ENCODE measurements at regions of chr7 and their contacts with region 1.

Region 1: GRCh38 chr7:39894904-39895303 is 55.2 kb upstream of the CDK13 start:
- DNase-seq: no peak
- ATAC-seq: no peak
- H3K4me3 Mint-ChIP-seq: no peak overlapping the region
- H3K27ac Mint-ChIP-seq: no peak overlapping the region
- H3K4me1 Mint-ChIP-seq: no peaks in the 10 kb centered on the region
- H3K27me3 Mint-ChIP-seq: no peaks in the 10 kb centered on the region
- CTCF ChIP-seq: no peak

Region 2: GRCh38 chr7:39934132-39934531 is 39.2 kb after region 1 on chr7:
- CTCF ChIA-PET with region 1: interaction called, 12 read pairs
- POLR2A ChIA-PET with region 1: no interaction called
- intact Hi-C with region 1: no loop called
- DNase-seq: no peak
- ATAC-seq: no peak
- H3K4me3 Mint-ChIP-seq: no peak overlapping the region
- H3K27ac Mint-ChIP-seq: no peak overlapping the region
- H3K4me1 Mint-ChIP-seq: no peaks in the 10 kb centered on the region
- H3K27me3 Mint-ChIP-seq: no peaks in the 10 kb centered on the region
- CTCF ChIP-seq: no peak

Region 3: DNA sequence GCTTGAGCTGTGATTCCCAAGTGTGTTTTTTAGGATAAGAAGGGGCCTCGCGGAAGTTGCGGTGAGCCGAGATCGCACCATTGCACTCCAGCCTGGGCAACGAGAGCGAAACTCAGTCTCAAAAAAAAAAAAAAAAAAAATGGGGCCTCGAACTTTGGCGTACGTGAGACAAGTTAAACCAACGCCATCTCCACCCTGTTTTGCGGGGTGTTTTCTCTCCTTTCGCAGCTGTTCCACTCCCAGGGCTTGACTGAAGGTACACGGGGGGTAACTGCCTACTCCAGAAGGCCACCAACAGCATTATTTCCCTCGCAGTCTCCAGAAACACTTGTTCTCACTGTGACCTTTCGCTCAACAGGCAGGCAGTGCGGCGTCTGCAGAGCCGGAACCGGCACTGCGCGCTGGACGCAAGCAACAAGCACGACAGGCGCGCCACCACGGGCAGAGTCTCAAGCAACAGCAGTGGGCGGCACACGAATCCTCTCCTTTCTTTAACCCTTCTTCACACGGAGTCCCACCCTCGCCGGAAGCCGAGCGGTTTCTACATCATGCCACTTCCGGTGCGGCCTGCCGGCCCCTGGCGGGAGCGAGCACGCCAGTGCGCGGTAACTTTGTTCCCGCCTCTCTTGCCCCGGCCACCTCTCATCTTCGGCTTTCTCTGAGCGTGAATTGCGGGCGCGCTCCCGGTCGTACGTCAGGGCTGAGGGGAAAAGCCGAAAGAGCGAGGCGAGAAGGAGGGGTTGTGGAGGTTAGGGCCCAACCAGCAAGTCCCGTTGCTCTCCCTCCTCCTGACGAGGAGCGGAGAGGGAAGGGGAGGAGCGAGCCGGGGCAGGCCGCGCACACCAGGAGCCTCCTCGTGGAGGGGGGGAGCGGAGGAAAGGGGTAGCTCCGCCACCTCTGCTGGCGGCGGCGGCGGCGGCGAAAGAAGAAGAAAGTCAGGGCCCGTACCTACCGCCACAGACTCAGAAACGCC is 54.3 kb after region 1 on chr7:
- CTCF ChIA-PET with region 1: interaction called, 10 read pairs
- POLR2A ChIA-PET with region 1: no interaction called
- intact Hi-C with region 1: no loop called
- DNase-seq: peak; percentile 98
- ATAC-seq: peak; percentile 79
- H3K4me3 Mint-ChIP-seq: peak overlapping the region; percentile 90
- H3K27ac Mint-ChIP-seq: peak overlapping the region; percentile 99
- H3K4me1 Mint-ChIP-seq: peaks cover 20% of the 10 kb centered on the region
- H3K27me3 Mint-ChIP-seq: no peaks in the 10 kb centered on the region
- CTCF ChIP-seq: no peak

Region 4: GRCh38 chr7:39958038-39958437 is 63.1 kb after region 1 on chr7:
- CTCF ChIA-PET with region 1: interaction called, 15 read pairs
- POLR2A ChIA-PET with region 1: no interaction called
- intact Hi-C with region 1: no loop called
- DNase-seq: no peak
- ATAC-seq: no peak
- H3K4me3 Mint-ChIP-seq: no peak overlapping the region
- H3K27ac Mint-ChIP-seq: no peak overlapping the region
- H3K4me1 Mint-ChIP-seq: peaks cover 73% of the 10 kb centered on the region
- H3K27me3 Mint-ChIP-seq: no peaks in the 10 kb centered on the region
- CTCF ChIP-seq: no peak

Region 5: GRCh38 chr7:40047661-40048060 is 152.8 kb after region 1 on chr7:
- CTCF ChIA-PET with region 1: interaction called, 142 read pairs
- POLR2A ChIA-PET with region 1: no interaction called
- intact Hi-C with region 1: loop called (anchors 2 kb)
- DNase-seq: no peak
- ATAC-seq: no peak
- H3K4me3 Mint-ChIP-seq: no peak overlapping the region
- H3K27ac Mint-ChIP-seq: no peak overlapping the region
- H3K4me1 Mint-ChIP-seq: peaks cover 3% of the 10 kb centered on the region
- H3K27me3 Mint-ChIP-seq: no peaks in the 10 kb centered on the region
- CTCF ChIP-seq: peak; percentile 57

Measured in activated CD8-positive, alpha-beta T cell treated with anti-CD3 and anti-CD28 coated beads for 36 hours (primary cell).